Pancreas (tissue), 10 donors: ENCODE measurements at regions of chr4 and their contacts with region 1.

Region 1: DNA sequence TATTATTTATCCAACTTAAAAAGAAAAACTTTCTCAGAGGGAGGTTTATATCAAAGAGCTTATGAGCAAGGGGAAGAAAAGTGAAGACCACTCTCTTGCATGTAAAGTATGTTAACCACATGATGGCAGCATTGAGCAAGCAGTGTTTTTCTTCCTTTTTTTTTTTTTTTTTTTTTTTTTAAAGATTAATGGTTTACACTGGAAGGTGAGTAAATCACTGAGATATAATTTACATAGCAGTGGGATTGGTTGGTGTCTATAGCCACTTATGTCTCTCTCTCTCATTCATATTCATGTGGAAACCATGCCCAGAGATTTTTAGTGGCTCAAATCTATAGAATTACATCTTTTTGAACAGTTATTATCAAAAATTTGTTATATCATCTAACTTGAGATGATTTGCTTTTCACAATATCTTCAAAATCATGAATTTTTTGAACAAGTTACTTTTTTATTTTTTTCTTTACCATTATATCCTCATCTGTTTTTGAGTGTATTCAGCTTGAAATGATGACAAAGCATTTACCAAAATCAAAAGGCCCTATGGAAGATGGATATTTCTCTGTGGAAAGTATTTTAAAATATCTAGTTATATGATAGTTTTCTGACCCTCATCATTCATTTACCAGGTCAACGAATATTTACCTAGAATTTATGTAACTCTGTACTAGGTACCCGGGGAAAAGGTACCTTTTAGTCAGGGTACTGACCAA is 31.6 kb downstream of the MTHFD2L start:
- DNase-seq: no peak
- ATAC-seq: peak; percentile 56 to 88 (median 80)
- H3K4me3 ChIP-seq: no peak overlapping the region
- H3K27ac ChIP-seq: no peak overlapping the region
- H3K4me1 ChIP-seq: peaks cover 5 to 13% (median 5%) of the 10 kb centered on the region in 3 donors
- H3K27me3 ChIP-seq: no peaks in the 10 kb centered on the region
- CTCF ChIP-seq: peak; percentile 30 to 62 (median 48)

Region 2: DNA sequence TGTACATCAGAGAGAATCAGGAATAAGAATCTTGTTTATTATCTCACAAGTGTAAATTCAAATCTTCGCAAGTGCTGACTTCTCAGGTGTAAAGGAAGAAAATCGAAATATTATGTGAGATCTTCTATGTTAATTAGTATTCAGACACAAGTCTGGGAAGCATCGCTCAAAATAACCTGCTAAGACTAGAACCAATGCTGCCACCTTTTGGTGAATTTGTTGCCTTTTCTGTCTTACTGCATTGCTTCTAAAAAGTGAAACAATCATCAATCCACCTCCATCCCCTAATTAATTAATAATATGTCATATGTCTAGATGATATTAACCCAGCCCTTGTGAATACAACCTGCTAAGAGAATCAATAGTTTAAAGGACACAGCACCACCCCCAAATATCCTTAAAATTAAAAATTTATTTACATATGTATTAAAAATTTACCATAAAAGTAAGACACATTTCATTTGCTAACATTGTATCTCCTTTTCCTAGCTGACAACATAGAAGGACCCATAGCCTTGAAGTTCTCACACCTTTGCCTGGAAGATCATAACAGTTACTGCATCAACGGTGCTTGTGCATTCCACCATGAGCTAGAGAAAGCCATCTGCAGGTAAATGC is 122.3 kb after region 1 on chr4:
- intact Hi-C with region 1: loop called in 2 of 3 experiments (anchors 10 kb)
- DNase-seq: peak in 3 of 6 donors; percentile 11 to 35 (median 28)
- ATAC-seq: peak in 3 of 4 donors; percentile 69 to 81 (median 79)
- H3K4me3 ChIP-seq: no peak overlapping the region
- H3K27ac ChIP-seq: no peak overlapping the region
- H3K4me1 ChIP-seq: no peaks in the 10 kb centered on the region
- H3K27me3 ChIP-seq: no peaks in the 10 kb centered on the region
- CTCF ChIP-seq: peak in 3 of 4 donors; percentile 26 to 40 (median 36)